ENCODE measurements at regions of chr3 and their contacts with region 1.

Region 1: DNA sequence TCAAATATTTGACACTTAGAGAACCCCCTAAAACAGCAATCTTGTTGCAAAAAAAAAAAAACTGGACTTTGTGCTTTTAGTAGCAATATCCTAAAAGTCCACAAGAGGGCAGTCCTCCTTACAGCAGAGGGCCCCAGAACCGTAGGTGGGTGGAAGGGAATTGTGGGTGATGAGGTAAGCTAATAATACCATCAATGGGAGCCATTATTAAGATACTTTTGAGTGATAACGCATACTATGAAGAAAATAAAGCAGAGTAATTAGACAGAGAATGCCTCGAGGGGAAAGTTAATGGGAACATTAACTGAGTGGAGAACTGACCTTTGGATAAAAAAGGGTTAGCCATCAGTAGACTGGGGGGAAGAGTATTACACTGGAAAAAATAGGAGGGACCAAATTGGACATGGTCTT is 229.9 kb downstream of the THRB start:
- DNase-seq: peak; percentile 39 to 43
- H3K4me3 ChIP-seq: no peak overlapping the region
- H3K4me1 ChIP-seq: no peaks in the 10 kb centered on the region
- H3K27me3 ChIP-seq: no peaks in the 10 kb centered on the region

Region 2: DNA sequence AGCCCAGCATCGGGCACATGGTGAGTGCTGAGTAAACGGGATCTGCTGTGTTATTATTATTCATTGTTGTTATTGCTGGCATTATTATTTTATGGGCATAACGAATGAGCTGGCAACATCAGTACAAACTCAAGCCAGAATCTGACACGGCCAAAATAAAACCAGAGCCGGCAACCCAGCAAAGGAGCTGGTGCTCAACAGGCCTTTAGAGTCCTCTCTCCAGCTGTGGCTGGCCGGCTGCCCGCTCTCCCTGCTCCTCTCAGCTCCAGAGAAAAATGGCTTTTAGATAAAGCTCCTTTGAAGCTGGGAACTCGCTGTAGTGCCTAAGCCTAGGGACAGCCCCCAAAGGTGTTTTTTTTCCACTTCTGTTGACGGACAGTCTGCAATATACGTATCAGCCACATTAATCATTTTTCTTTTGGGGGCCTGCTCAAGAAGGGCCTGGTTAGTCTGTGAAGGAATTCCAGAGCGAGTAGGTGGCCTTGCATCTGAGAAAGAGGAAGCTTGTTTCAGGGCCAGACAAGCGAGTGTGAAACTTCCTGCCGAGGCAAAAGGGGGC is 652.9 kb before region 1 on chr3:
- in situ Hi-C with region 1: no loop called
- DNase-seq: no peak
- H3K4me3 ChIP-seq: no peak overlapping the region
- H3K4me1 ChIP-seq: no peaks in the 10 kb centered on the region
- H3K27me3 ChIP-seq: no peaks in the 10 kb centered on the region; the same call in 1 of the 2 replicates

Region 3: GRCh38 chr3:24343084-24343783 is 78.5 kb after region 1 on chr3:
- in situ Hi-C with region 1: no loop called
- DNase-seq: no peak
- H3K4me3 ChIP-seq: no peak overlapping the region
- H3K4me1 ChIP-seq: peaks cover 4% of the 10 kb centered on the region
- H3K27me3 ChIP-seq: no peaks in the 10 kb centered on the region

Region 4: DNA sequence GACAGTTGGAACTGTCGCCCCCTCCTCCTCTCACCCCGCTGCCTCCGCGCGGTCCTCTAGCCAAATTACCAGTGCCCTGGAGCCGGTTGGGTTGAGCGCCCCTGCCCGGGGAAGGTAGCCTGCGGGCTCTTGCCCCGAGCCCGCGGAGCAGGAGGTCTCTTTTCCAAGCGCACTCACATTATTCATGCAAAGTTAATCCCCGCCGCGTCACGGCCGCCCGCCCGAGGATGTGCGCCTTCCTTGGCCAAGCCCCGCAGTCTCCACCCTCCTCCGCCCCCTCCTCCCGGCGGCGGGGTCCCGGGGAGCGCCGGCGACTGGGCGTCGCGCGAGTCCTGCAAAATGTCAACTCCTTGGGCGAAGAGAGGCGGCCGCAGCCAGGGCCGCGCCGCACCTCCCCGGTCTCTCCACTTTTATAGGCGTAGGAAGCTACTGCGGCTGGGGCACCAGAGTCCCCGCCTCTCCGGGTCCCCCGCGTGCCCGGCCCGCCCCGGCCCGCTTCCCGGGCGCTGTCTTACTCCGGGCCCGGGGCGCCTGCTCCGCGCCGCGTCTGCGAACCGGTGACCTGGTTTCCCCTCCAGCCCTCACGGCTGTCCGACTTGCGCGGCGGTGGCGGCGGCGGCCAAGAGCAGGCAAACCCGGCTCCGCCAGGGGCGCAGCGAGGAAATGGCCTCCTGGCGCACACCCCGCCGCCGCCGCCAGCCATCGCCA is 230.0 kb after region 1 on chr3 and contains the start of gene THRB:
- in situ Hi-C with region 1: loop called (anchors 10 kb)
- DNase-seq: peak; percentile 79 to 92
- H3K4me3 ChIP-seq: peak within 1 kb of the TSS; percentile 67
- H3K4me1 ChIP-seq: peaks cover 40% of the 10 kb centered on the region
- H3K27me3 ChIP-seq: no peaks in the 10 kb centered on the region

Region 5: DNA sequence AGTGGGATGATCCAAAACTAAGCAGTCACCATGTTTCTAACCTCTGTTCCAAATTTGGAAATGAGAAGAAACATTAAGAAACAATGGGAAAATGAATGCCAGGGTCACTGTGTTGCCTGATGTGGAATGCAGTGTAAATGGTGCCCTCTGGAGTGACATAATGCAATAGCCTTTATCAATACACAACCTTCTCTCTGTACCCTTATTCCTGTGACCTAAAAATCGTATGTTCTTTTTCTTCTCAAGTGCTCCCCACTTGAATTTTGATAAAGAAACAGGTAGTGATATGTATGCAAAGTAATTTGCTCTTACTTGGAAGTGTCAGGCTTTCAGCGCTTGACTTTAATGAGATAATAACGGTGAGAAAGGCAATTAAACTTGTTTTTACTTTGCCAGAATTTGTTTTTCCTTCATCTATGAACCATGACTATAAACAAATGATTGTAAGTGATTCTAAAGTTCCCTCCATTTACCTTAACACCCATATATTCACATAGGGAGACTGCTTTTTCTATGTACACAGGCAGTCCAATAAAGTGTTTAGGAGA is 375.7 kb after region 1 on chr3:
- in situ Hi-C with region 1: loop called (anchors 10 kb)
- DNase-seq: peak; percentile 50 to 77
- H3K4me3 ChIP-seq: no peak overlapping the region
- H3K4me1 ChIP-seq: peaks cover 20% of the 10 kb centered on the region
- H3K27me3 ChIP-seq: no peaks in the 10 kb centered on the region

Measured in HAP-1 (cell line).